ENCODE measurements at regions of chr17 and their contacts with region 1.

Region 1: GRCh38 chr17:77331301-77331864 is 190.6 kb downstream of the SEC14L1 start:
- DNase-seq: peak; percentile 92 to 95 (median 94)
- H3K4me3 ChIP-seq: peak overlapping the region; percentile 48 to 57
- H3K4me3 Mint-ChIP-seq: peak overlapping the region; percentile 80 to 90 (median 85)
- H3K27ac ChIP-seq: peak overlapping the region; percentile 43
- H3K27ac Mint-ChIP-seq: peak overlapping the region; percentile 83 to 95 (median 93)
- H3K4me1 ChIP-seq: peaks cover 52% of the 10 kb centered on the region
- H3K4me1 Mint-ChIP-seq: peaks cover 30 to 66% (median 44%) of the 10 kb centered on the region in 4 donors
- H3K27me3 ChIP-seq: no peaks in the 10 kb centered on the region
- H3K27me3 Mint-ChIP-seq: no peaks in the 10 kb centered on the region

Region 2: GRCh38 chr17:76278952-76279741 is 1052.2 kb before region 1 on chr17:
- CTCF ChIA-PET with region 1: no interaction called
- POLR2A ChIA-PET with region 1: no interaction called
- intact Hi-C with region 1: no loop called
- DNase-seq: peak; percentile 78 to 84 (median 79)
- H3K4me3 ChIP-seq: no peak overlapping the region
- H3K4me3 Mint-ChIP-seq: no peak overlapping the region
- H3K27ac ChIP-seq: no peak overlapping the region
- H3K27ac Mint-ChIP-seq: peak overlapping the region in 3 of 7 donors; percentile 25 to 77 (median 59)
- H3K4me1 ChIP-seq: peaks cover 17% of the 10 kb centered on the region
- H3K4me1 Mint-ChIP-seq: peaks cover 7 to 28% (median 10%) of the 10 kb centered on the region in 4 donors
- H3K27me3 ChIP-seq: no peaks in the 10 kb centered on the region
- H3K27me3 Mint-ChIP-seq: no peaks in the 10 kb centered on the region

Region 3: GRCh38 chr17:77027271-77027670 is 304.1 kb before region 1 on chr17:
- CTCF ChIA-PET with region 1: no interaction called
- POLR2A ChIA-PET with region 1: no interaction called
- intact Hi-C with region 1: no loop called
- DNase-seq: no peak
- H3K4me3 ChIP-seq: no peak overlapping the region
- H3K4me3 Mint-ChIP-seq: no peak overlapping the region
- H3K27ac ChIP-seq: no peak overlapping the region
- H3K27ac Mint-ChIP-seq: no peak overlapping the region
- H3K4me1 ChIP-seq: no peaks in the 10 kb centered on the region
- H3K4me1 Mint-ChIP-seq: no peaks in the 10 kb centered on the region
- H3K27me3 ChIP-seq: no peaks in the 10 kb centered on the region
- H3K27me3 Mint-ChIP-seq: peaks cover 0 to 4% of the 10 kb centered on the region in 2 donors

Region 4: GRCh38 chr17:77372444-77373298 is 41.3 kb after region 1 on chr17:
- CTCF ChIA-PET with region 1: interaction called, 63 read pairs
- POLR2A ChIA-PET with region 1: interaction called, 248 read pairs
- intact Hi-C with region 1: loop called (anchors 1 kb)
- DNase-seq: peak; percentile 61 to 74 (median 68)
- H3K4me3 ChIP-seq: peak overlapping the region; percentile 52 to 95
- H3K4me3 Mint-ChIP-seq: peak overlapping the region; percentile 82 to 100 (median 87)
- H3K27ac ChIP-seq: peak overlapping the region; percentile 68
- H3K27ac Mint-ChIP-seq: peak overlapping the region; percentile 81 to 93 (median 90)
- H3K4me1 ChIP-seq: peaks cover 66% of the 10 kb centered on the region
- H3K4me1 Mint-ChIP-seq: peaks cover 43 to 84% (median 55%) of the 10 kb centered on the region in 4 donors
- H3K27me3 ChIP-seq: no peaks in the 10 kb centered on the region
- H3K27me3 Mint-ChIP-seq: no peaks in the 10 kb centered on the region

Region 5: DNA sequence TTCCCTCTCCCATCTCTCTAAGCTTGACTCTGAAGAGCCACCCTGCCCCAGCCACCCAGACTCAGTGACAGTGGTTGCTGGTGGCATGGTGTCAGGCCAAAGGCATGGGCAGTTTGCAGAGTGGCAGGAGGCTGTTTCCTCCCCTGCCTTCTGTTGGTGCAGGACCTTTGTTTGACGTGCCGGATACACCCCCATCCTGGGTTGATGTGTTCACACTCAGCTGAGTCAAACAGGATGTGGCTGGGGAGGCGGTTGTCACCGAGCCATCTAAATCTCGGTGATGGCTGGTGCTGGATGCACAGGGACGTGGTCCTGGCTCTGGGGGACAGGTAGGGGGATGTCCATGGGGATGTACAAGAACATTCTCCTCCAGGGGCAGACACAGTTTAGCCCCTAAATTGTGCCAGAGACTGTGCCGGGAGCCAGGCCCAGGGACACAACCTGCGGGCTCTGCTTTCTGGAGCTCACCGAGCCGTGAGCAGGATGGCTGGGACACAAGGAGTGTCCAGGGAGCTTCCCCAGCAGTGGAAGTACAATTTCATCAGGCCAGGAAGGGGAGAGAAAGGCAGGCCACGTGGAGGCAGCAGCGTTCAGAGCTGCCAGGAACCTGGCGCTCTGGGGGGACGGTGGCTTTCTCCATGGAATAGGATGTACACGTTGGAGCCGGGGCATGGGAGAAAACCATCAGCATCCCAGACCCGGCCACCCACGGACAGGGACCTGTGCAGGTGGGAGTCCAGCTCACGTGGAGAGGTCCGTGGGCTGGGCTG is 73.6 kb after region 1 on chr17:
- CTCF ChIA-PET with region 1: interaction called, 63 read pairs
- POLR2A ChIA-PET with region 1: interaction called, 113 read pairs
- intact Hi-C with region 1: loop called (anchors 1 kb)
- DNase-seq: peak; percentile 78 to 92 (median 83)
- H3K4me3 ChIP-seq: peak overlapping the region; percentile 59 to 88
- H3K4me3 Mint-ChIP-seq: peak overlapping the region; percentile 94 to 99 (median 96)
- H3K27ac ChIP-seq: peak overlapping the region; percentile 87
- H3K27ac Mint-ChIP-seq: peak overlapping the region; percentile 96 to 100 (median 98)
- H3K4me1 ChIP-seq: peaks cover 97% of the 10 kb centered on the region
- H3K4me1 Mint-ChIP-seq: peaks cover 59 to 100% (median 81%) of the 10 kb centered on the region in 4 donors
- H3K27me3 ChIP-seq: no peaks in the 10 kb centered on the region
- H3K27me3 Mint-ChIP-seq: no peaks in the 10 kb centered on the region

Region 6: GRCh38 chr17:77437017-77437416 is 105.6 kb after region 1 on chr17:
- CTCF ChIA-PET with region 1: interaction called, 17 read pairs
- POLR2A ChIA-PET with region 1: interaction called, 94 read pairs
- intact Hi-C with region 1: loop called (anchors 1 kb)
- DNase-seq: no peak
- H3K4me3 ChIP-seq: peak overlapping the region; percentile 11 to 60
- H3K4me3 Mint-ChIP-seq: peak overlapping the region; percentile 69 to 92 (median 82)
- H3K27ac ChIP-seq: peak overlapping the region; percentile 90
- H3K27ac Mint-ChIP-seq: peak overlapping the region; percentile 90 to 99 (median 96)
- H3K4me1 ChIP-seq: peaks cover 100% of the 10 kb centered on the region
- H3K4me1 Mint-ChIP-seq: peaks cover 60 to 98% (median 87%) of the 10 kb centered on the region in 4 donors
- H3K27me3 ChIP-seq: no peaks in the 10 kb centered on the region
- H3K27me3 Mint-ChIP-seq: no peaks in the 10 kb centered on the region

Region 7: GRCh38 chr17:77465358-77466041 is 134.1 kb after region 1 on chr17:
- CTCF ChIA-PET with region 1: no interaction called
- POLR2A ChIA-PET with region 1: interaction called, 252 read pairs
- intact Hi-C with region 1: no loop called
- DNase-seq: peak; percentile 82 to 94 (median 84)
- H3K4me3 ChIP-seq: peak overlapping the region; percentile 6 to 47
- H3K4me3 Mint-ChIP-seq: peak overlapping the region; percentile 80 to 90 (median 84)
- H3K27ac ChIP-seq: peak overlapping the region; percentile 50
- H3K27ac Mint-ChIP-seq: peak overlapping the region; percentile 83 to 97 (median 85)
- H3K4me1 ChIP-seq: peaks cover 99% of the 10 kb centered on the region
- H3K4me1 Mint-ChIP-seq: peaks cover 60 to 95% (median 79%) of the 10 kb centered on the region in 4 donors
- H3K27me3 ChIP-seq: no peaks in the 10 kb centered on the region
- H3K27me3 Mint-ChIP-seq: no peaks in the 10 kb centered on the region

Region 8: GRCh38 chr17:77494664-77495435 is 163.5 kb after region 1 on chr17:
- CTCF ChIA-PET with region 1: interaction called, 47 read pairs
- POLR2A ChIA-PET with region 1: interaction called, 27 read pairs
- intact Hi-C with region 1: loop called (anchors 1 kb)
- DNase-seq: peak; percentile 64 to 78 (median 70)
- H3K4me3 ChIP-seq: no peak overlapping the region
- H3K4me3 Mint-ChIP-seq: peak overlapping the region in 2 of 8 donors; percentile 5 to 35
- H3K27ac ChIP-seq: peak overlapping the region; percentile 10
- H3K27ac Mint-ChIP-seq: peak overlapping the region; percentile 57 to 94 (median 87)
- H3K4me1 ChIP-seq: peaks cover 41% of the 10 kb centered on the region
- H3K4me1 Mint-ChIP-seq: peaks cover 8 to 45% (median 17%) of the 10 kb centered on the region in 4 donors
- H3K27me3 ChIP-seq: no peaks in the 10 kb centered on the region
- H3K27me3 Mint-ChIP-seq: no peaks in the 10 kb centered on the region

Measured in CD4-positive, alpha-beta memory T cell (primary cell).